ENCODE measurements at regions of chr7 and their contacts with region 1.

Region 1: GRCh38 chr7:80711531-80711930 is 73.1 kb downstream of the CD36 start:
- DNase-seq: no peak
- H3K4me3 ChIP-seq: no peak overlapping the region
- H3K27ac ChIP-seq: no peak overlapping the region
- H3K4me1 ChIP-seq: no peaks in the 10 kb centered on the region
- H3K27me3 ChIP-seq: no peaks in the 10 kb centered on the region
- CTCF ChIP-seq: no peak

Region 2: GRCh38 chr7:80517282-80517747 is 194.2 kb before region 1 on chr7:
- CTCF ChIA-PET with region 1: no interaction called
- POLR2A ChIA-PET with region 1: no interaction called
- intact Hi-C with region 1: no loop called
- DNase-seq: no peak
- H3K4me3 ChIP-seq: no peak overlapping the region
- H3K27ac ChIP-seq: no peak overlapping the region
- H3K4me1 ChIP-seq: peaks cover 13% of the 10 kb centered on the region
- H3K27me3 ChIP-seq: no peaks in the 10 kb centered on the region
- CTCF ChIP-seq: no peak

Region 3: DNA sequence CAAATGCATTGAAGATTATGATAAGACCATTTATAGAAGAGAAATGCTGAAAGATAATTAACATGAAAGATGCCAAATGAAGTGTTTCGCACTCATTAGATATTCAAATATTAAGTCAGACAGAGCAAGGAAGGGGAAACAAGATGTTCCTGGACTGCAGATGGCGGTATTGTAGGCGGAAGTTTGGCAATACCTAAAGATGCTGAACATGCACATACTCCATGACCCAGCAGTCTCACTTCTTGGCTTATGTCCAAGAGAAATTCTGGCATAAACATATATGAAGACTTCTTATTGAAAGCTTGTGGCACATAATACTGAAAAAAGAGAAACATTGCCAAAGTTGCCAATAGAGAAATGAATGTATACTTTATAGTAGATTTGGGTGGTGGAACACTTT is 532.7 kb after region 1 on chr7:
- CTCF ChIA-PET with region 1: no interaction called
- POLR2A ChIA-PET with region 1: no interaction called
- intact Hi-C with region 1: no loop called
- DNase-seq: no peak
- H3K4me3 ChIP-seq: no peak overlapping the region
- H3K27ac ChIP-seq: no peak overlapping the region
- H3K4me1 ChIP-seq: no peaks in the 10 kb centered on the region
- H3K27me3 ChIP-seq: no peaks in the 10 kb centered on the region
- CTCF ChIP-seq: no peak

Region 4: GRCh38 chr7:81736088-81736487 is 1024.6 kb after region 1 on chr7:
- CTCF ChIA-PET with region 1: interaction called, 12 read pairs
- POLR2A ChIA-PET with region 1: no interaction called
- intact Hi-C with region 1: no loop called
- DNase-seq: no peak
- H3K4me3 ChIP-seq: no peak overlapping the region
- H3K27ac ChIP-seq: no peak overlapping the region
- H3K4me1 ChIP-seq: no peaks in the 10 kb centered on the region
- H3K27me3 ChIP-seq: no peaks in the 10 kb centered on the region
- CTCF ChIP-seq: no peak

Measured in PC-9 (cell line).